ENCODE measurements at regions of chr14 and their contacts with region 1.

Region 1: GRCh38 chr14:77014004-77014604 is 14.4 kb downstream of the IRF2BPL start:
- DNase-seq: peak; percentile 43 to 83 (median 70)
- H3K4me3 ChIP-seq: no peak overlapping the region
- H3K27ac ChIP-seq: no peak overlapping the region
- H3K4me1 ChIP-seq: no peaks in the 10 kb centered on the region
- H3K27me3 ChIP-seq: no peaks in the 10 kb centered on the region
- CTCF ChIP-seq: no peak
- POLR2A ChIP-seq: no peak

Region 2: DNA sequence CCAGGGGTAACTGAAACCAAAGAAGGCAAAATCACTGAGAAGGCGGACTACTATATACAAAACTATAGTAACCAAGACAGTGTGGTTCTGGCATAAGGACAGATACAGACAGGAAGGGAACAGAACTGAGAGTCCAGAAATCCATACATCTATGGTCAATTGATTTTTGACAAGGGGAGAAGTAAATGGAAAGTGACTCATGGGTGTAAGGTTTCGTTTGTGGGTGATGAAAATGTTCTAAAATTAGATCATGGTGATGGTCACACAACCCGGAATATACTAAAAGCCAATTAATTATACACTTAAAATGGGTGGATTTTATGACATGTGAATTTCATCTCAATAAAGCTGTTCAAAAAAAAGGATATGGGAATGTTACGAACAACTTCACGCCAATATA is 220.1 kb before region 1 on chr14:
- intact Hi-C with region 1: no loop called
- DNase-seq: no peak
- H3K4me3 ChIP-seq: no peak overlapping the region
- H3K27ac ChIP-seq: no peak overlapping the region
- H3K4me1 ChIP-seq: no peaks in the 10 kb centered on the region
- H3K27me3 ChIP-seq: no peaks in the 10 kb centered on the region
- CTCF ChIP-seq: no peak
- POLR2A ChIP-seq: no peak

Region 3: DNA sequence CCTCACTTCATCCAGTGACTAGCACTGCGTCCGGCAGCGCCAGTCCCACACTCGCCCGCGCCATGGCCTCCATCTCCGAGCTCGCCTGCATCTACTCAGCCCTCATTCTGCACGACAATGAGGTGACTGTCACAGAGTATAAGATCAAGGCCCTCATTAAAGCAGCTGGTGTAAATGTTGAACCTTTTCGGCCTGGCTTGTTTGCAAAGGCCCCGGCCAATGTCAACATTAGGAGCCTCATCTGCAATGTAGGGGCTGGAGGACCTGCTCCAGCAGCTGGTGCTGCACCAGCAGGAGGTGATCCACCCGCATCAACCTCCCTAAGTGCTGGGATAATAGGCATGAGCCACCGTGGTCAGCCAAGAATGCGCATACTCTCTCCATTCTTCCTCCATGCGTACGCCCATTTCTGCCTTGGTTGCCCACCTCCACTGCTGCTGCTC is 45.5 kb before region 1 on chr14:
- intact Hi-C with region 1: loop called in 1 of 2 experiments (anchors 5 kb)
- DNase-seq: no peak
- H3K4me3 ChIP-seq: no peak overlapping the region
- H3K27ac ChIP-seq: no peak overlapping the region
- H3K4me1 ChIP-seq: no peaks in the 10 kb centered on the region
- H3K27me3 ChIP-seq: no peaks in the 10 kb centered on the region
- CTCF ChIP-seq: no peak
- POLR2A ChIP-seq: no peak

Measured in adrenal gland (tissue), 19 donors.